T-cell (primary cell): ENCODE measurements at regions of chr12 and their contacts with region 1.

Region 1: DNA sequence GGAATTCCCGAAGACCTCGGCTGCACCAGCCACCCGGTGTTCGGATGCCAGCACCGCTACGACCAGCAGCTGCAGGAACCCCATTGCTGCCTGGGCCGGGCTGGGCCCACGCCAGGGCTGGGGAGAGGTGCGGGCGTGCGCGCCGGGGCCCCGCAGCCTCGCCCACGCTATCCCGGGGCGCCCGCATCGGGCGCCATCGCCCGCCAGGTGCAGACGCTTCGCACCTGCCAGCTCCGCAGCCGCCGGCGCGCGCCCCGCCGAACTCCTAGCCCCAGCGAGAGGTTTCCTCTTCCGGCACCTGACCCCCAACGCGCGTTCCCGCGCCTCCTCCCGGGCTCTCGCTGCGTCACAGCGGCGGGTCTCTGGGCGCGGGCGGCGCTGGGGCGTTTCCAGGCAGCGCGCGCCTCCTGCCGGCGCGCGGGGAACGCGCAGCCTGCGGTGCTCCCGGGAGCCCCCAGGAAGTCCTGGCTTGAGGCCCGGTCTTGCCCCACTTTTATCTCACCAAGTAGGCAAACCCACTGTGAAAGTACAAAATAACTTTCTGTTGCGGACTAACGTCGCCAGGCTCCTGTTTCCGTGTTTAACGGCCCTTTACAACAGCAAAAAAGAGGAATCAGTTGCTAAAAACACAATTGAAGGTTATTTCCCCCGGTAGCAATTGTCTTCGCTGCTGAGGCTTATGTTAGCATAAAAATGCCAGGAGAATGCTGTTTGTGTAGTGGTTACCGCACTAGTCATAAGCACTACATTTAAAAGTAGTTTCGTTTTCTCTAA is at the start of gene TM7SF3:
- DNase-seq: peak; percentile 90 to 98 (median 96)
- ATAC-seq: peak; percentile 89 to 96 (median 94)
- H3K4me3 ChIP-seq: peak within 1 kb of the TSS; percentile 82 to 89
- H3K4me3 Mint-ChIP-seq: peak within 1 kb of the TSS; percentile 82 to 94 (median 91)
- H3K27ac ChIP-seq: peak within 1 kb of the TSS; percentile 99
- H3K27ac Mint-ChIP-seq: peak within 1 kb of the TSS; percentile 93 to 94
- H3K4me1 ChIP-seq: peaks cover 25 to 28% of the 10 kb centered on the region in 2 experiments
- H3K4me1 Mint-ChIP-seq: peaks cover 49 to 53% (median 50%) of the 10 kb centered on the region in 3 donors
- H3K27me3 ChIP-seq: no peaks in the 10 kb centered on the region
- H3K27me3 Mint-ChIP-seq: no peaks in the 10 kb centered on the region
- total RNA-seq, gene TM7SF3: 24.9 to 30.6 (median 26.8) TPM

Region 2: DNA sequence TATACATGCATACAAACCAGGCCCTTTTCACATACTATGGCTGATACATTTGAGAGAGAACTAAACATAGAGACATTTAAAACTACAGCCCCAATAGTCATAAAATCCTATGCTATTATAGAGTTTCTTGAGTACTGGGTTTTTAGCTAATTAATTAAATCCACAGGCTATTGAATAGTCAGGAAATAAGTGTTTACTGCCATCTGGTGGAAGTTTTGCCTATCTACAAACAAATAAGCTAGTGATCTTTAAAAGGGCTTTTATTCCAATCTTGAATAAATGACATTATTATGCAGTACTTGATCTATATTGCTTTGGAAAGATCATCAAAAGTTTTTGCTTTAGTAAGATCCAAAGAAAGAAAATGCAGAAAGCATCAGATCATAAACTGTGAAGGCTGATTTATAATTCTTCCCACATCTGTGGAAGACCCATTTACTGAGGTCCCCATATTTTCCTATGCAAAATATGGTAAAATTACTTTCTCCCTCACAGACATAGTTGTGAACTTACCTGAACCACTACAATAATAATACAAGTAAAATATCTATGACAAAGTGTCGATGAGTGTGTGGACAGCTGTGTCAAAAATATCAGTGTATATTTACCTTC is 312.6 kb before region 1 on chr12:
- CTCF ChIA-PET with region 1: no interaction called
- POLR2A ChIA-PET with region 1: no interaction called
- DNase-seq: peak in 1 of 35 experiments; percentile 45
- ATAC-seq: no peak
- H3K4me3 ChIP-seq: no peak overlapping the region
- H3K4me3 Mint-ChIP-seq: no peak overlapping the region
- H3K27ac ChIP-seq: no peak overlapping the region
- H3K27ac Mint-ChIP-seq: no peak overlapping the region
- H3K4me1 ChIP-seq: no peaks in the 10 kb centered on the region
- H3K4me1 Mint-ChIP-seq: no peaks in the 10 kb centered on the region
- H3K27me3 ChIP-seq: no peaks in the 10 kb centered on the region
- H3K27me3 Mint-ChIP-seq: no peaks in the 10 kb centered on the region

Region 3: GRCh38 chr12:26832822-26833742 is 181.2 kb before region 1 on chr12 and contains the start of gene ITPR2:
- CTCF ChIA-PET with region 1: interaction called, 4 to 18 read pairs
- POLR2A ChIA-PET with region 1: no interaction called
- DNase-seq: peak; percentile 80 to 95 (median 88)
- ATAC-seq: peak; percentile 92 to 95 (median 92)
- H3K4me3 ChIP-seq: peak within 1 kb of the TSS; percentile 95 to 98
- H3K4me3 Mint-ChIP-seq: peak within 1 kb of the TSS; percentile 95 to 97 (median 97)
- H3K27ac ChIP-seq: peak within 1 kb of the TSS; percentile 91
- H3K27ac Mint-ChIP-seq: peak within 1 kb of the TSS; percentile 98 to 99
- H3K4me1 ChIP-seq: peaks cover 16 to 21% of the 10 kb centered on the region in 2 experiments
- H3K4me1 Mint-ChIP-seq: peaks cover 43 to 46% (median 45%) of the 10 kb centered on the region in 3 donors
- H3K27me3 ChIP-seq: no peaks in the 10 kb centered on the region
- H3K27me3 Mint-ChIP-seq: no peaks in the 10 kb centered on the region
- total RNA-seq, gene ITPR2: 38.8 to 52.5 (median 44.5) TPM

Region 4: GRCh38 chr12:26937875-26938700 is 76.2 kb before region 1 on chr12 and contains the starts of genes FGFR1OP2 and INTS13:
- CTCF ChIA-PET with region 1: interaction called, 3 to 12 read pairs
- POLR2A ChIA-PET with region 1: interaction called in 1 of 2 experiments, 3 read pairs
- DNase-seq: peak; percentile 87 to 98 (median 93)
- ATAC-seq: peak; percentile 91 to 92 (median 92)
- H3K4me3 ChIP-seq: peak within 1 kb of the TSS; percentile 87 to 98
- H3K4me3 Mint-ChIP-seq: peak within 1 kb of the TSS; percentile 91 to 98 (median 95)
- H3K27ac ChIP-seq: peak within 1 kb of the TSS; percentile 88
- H3K27ac Mint-ChIP-seq: peak within 1 kb of the TSS; percentile 98 to 99
- H3K4me1 ChIP-seq: peaks cover 18 to 28% of the 10 kb centered on the region in 2 experiments
- H3K4me1 Mint-ChIP-seq: peaks cover 71 to 86% (median 73%) of the 10 kb centered on the region in 3 donors
- H3K27me3 ChIP-seq: no peaks in the 10 kb centered on the region
- H3K27me3 Mint-ChIP-seq: no peaks in the 10 kb centered on the region
- total RNA-seq, gene FGFR1OP2: 51.7 to 83.6 (median 71.3) TPM
- total RNA-seq, gene INTS13: 19.7 to 26.0 (median 23.9) TPM

Region 5: GRCh38 chr12:26971963-26972362 is 42.3 kb before region 1 on chr12:
- CTCF ChIA-PET with region 1: interaction called in 1 of 2 experiments, 15 read pairs
- POLR2A ChIA-PET with region 1: no interaction called
- DNase-seq: peak; percentile 2 to 85 (median 57)
- ATAC-seq: peak; percentile 70 to 100 (median 90)
- H3K4me3 ChIP-seq: no peak overlapping the region
- H3K4me3 Mint-ChIP-seq: peak overlapping the region in 1 of 3 donors; percentile 27
- H3K27ac ChIP-seq: peak overlapping the region; percentile 59
- H3K27ac Mint-ChIP-seq: peak overlapping the region; percentile 77 to 87
- H3K4me1 ChIP-seq: peaks cover 5 to 13% of the 10 kb centered on the region in 2 experiments
- H3K4me1 Mint-ChIP-seq: peaks cover 13 to 25% (median 20%) of the 10 kb centered on the region in 3 donors
- H3K27me3 ChIP-seq: no peaks in the 10 kb centered on the region
- H3K27me3 Mint-ChIP-seq: no peaks in the 10 kb centered on the region

Region 6: DNA sequence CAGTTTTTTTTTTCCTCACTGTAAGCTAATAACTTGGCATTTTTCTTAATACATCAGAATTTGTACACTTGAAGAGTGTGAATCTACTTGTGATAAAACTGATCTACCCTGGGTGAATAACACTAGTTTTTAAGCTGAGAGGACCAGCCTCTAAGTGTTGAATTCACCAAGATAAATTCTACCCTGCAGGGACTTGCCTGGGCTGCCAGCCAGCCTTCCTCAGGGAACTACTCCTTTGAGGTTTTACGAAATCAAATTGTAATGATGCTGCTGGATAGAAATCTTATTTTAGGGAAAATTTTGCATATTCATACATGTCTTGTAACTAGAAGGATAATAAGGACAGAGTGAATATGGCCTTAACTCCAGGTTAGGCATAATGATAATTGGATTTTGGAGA is 10.0 kb after region 1 on chr12:
- CTCF ChIA-PET with region 1: interaction called, 13 to 15 read pairs
- POLR2A ChIA-PET with region 1: interaction called, 3 to 6 read pairs
- DNase-seq: no peak
- ATAC-seq: no peak
- H3K4me3 ChIP-seq: no peak overlapping the region
- H3K4me3 Mint-ChIP-seq: peak overlapping the region; percentile 45 to 98 (median 96)
- H3K27ac ChIP-seq: no peak overlapping the region
- H3K27ac Mint-ChIP-seq: no peak overlapping the region
- H3K4me1 ChIP-seq: peaks cover 8 to 21% of the 10 kb centered on the region in 2 experiments
- H3K4me1 Mint-ChIP-seq: peaks cover 40 to 45% (median 44%) of the 10 kb centered on the region in 3 donors
- H3K27me3 ChIP-seq: no peaks in the 10 kb centered on the region
- H3K27me3 Mint-ChIP-seq: no peaks in the 10 kb centered on the region

Region 7: GRCh38 chr12:27140478-27140969 is 126.3 kb after region 1 on chr12:
- CTCF ChIA-PET with region 1: interaction called, 4 to 12 read pairs
- POLR2A ChIA-PET with region 1: no interaction called
- DNase-seq: no peak
- ATAC-seq: no peak
- H3K4me3 ChIP-seq: no peak overlapping the region
- H3K4me3 Mint-ChIP-seq: no peak overlapping the region
- H3K27ac ChIP-seq: no peak overlapping the region
- H3K27ac Mint-ChIP-seq: no peak overlapping the region
- H3K4me1 ChIP-seq: peaks cover 0 to 3% of the 10 kb centered on the region in 2 experiments
- H3K4me1 Mint-ChIP-seq: peaks cover 14% of the 10 kb centered on the region in 3 donors
- H3K27me3 ChIP-seq: no peaks in the 10 kb centered on the region
- H3K27me3 Mint-ChIP-seq: no peaks in the 10 kb centered on the region

Region 8: DNA sequence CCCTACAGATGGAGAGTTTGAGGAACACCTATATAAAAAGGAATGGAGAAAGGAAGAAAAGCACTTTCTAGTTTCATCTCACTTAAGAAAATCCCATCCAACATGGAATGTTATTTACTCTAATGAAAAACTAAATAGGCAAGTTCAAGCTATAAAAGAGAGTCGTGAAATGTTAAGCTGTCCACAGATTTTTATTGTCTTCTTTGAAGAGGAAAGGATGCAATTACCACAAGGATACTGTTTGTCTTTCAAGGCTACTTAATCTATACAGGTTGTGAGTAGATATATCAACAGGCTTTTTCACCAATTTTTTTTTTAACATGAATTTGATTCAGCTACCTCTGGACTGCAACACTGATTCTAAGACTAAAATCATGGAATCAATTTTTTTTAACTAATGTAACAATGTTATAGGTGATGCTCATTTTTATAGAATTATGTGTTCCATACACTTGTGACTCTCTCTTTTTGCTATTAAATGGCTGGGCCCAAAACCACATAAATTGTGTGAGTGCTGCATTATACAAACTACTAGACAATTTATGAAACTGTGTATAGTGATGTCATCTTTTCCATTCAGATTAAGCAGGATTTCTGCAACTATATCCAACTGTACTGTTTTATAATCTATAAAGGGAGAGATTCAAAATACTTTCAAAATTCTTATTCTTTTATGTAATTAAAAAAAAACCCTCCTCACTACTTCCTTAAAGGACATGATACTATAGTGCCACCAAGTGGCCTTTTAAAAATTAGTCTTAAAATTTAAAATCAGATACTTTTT is 291.6 kb after region 1 on chr12:
- CTCF ChIA-PET with region 1: interaction called, 19 to 89 read pairs
- POLR2A ChIA-PET with region 1: interaction called in 1 of 2 experiments, 3 read pairs
- DNase-seq: peak in 1 of 35 experiments; percentile 61
- ATAC-seq: peak in 1 of 4 experiments; percentile 42
- H3K4me3 ChIP-seq: no peak overlapping the region
- H3K4me3 Mint-ChIP-seq: no peak overlapping the region
- H3K27ac ChIP-seq: no peak overlapping the region
- H3K27ac Mint-ChIP-seq: peak overlapping the region; percentile 29 to 45
- H3K4me1 ChIP-seq: no peaks in the 10 kb centered on the region
- H3K4me1 Mint-ChIP-seq: no peaks in the 10 kb centered on the region
- H3K27me3 ChIP-seq: no peaks in the 10 kb centered on the region
- H3K27me3 Mint-ChIP-seq: no peaks in the 10 kb centered on the region